ENCODE measurements at regions of chr17 and their contacts with region 1.

Region 1: DNA sequence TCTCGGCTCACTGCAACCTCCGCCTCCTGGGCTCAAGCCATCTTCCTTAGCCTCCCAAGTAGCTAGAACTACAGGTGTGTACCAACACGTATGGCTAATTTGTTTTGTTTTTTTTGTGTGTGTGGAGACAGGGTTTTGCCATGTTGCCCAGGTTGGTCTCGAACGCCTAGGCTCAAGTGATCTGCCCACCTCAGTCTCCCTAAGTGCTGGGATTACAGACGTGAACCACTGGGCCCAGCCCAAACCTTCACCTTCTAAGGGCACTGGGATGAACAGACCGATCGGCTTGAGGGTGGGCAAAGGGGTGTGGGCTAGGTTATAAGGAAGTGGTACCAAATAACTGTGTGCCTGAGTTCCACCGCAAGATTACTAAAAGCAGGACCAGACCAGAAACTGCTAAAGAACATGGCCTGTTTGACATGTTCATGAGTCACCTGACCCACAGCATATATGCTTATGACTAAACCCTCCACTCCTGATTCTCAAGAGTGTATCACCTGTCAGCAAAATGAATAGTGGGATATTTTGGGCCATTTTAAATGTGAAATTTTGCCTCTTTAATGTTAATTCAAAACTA is 8.1 kb downstream of the TMEM97 start:
- DNase-seq: peak in 1 of 5 donors; percentile 4
- H3K4me3 ChIP-seq: no peak overlapping the region
- H3K27ac ChIP-seq: no peak overlapping the region
- H3K4me1 ChIP-seq: no peaks in the 10 kb centered on the region
- H3K27me3 ChIP-seq: no peaks in the 10 kb centered on the region
- CTCF ChIP-seq: no peak
- EP300 ChIP-seq: no peak
- POLR2A ChIP-seq: no peak

Region 2: GRCh38 chr17:28033972-28034714 is 293.0 kb before region 1 on chr17:
- intact Hi-C with region 1: loop called in 1 of 4 experiments (anchors 10 kb)
- DNase-seq: no peak
- H3K4me3 ChIP-seq: no peak overlapping the region
- H3K27ac ChIP-seq: no peak overlapping the region
- H3K4me1 ChIP-seq: no peaks in the 10 kb centered on the region
- H3K27me3 ChIP-seq: no peaks in the 10 kb centered on the region
- CTCF ChIP-seq: no peak
- EP300 ChIP-seq: no peak
- POLR2A ChIP-seq: no peak

Region 3: DNA sequence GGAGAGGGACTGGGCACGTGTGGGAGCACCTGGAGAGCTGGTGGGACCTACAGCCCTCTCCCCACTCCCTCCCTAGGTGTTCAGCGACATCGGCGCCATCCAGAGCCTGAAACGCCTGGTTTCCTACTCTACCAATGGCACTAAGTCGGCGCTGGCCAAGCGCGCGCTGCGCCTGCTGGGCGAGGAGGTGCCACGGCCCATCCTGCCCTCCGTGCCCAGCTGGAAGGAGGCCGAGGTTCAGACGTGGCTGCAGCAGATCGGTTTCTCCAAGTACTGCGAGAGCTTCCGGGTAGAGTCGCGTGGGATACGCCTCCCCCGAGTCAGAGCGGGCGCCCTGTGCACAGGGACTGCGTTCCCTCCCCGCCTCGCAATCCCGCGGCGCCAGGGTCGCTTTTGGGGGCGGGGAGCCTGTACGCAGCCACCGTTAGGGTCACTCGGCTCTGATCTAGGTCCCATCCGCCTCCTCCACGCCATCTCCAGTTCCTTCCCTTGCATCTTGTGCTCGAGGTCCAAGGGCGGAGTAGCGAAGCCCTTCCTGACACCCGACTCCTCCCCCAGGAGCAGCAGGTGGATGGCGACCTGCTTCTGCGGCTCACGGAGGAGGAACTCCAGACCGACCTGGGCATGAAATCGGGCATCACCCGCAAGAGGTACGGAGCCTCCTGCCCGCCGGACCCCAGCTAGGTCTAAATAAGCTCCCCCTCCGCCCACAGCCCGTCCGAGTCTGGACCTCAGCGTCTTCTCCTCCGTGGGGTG is 57.3 kb after region 1 on chr17:
- intact Hi-C with region 1: no loop called
- DNase-seq: no peak
- H3K4me3 ChIP-seq: peak overlapping the region; percentile 20
- H3K27ac ChIP-seq: no peak overlapping the region
- H3K4me1 ChIP-seq: no peaks in the 10 kb centered on the region
- H3K27me3 ChIP-seq: no peaks in the 10 kb centered on the region
- CTCF ChIP-seq: no peak
- EP300 ChIP-seq: no peak
- POLR2A ChIP-seq: no peak

Measured in ovary (tissue), 10 donors.